PC-3 (cell line): ENCODE measurements at regions of chr10 and their contacts with region 1.

Region 1: DNA sequence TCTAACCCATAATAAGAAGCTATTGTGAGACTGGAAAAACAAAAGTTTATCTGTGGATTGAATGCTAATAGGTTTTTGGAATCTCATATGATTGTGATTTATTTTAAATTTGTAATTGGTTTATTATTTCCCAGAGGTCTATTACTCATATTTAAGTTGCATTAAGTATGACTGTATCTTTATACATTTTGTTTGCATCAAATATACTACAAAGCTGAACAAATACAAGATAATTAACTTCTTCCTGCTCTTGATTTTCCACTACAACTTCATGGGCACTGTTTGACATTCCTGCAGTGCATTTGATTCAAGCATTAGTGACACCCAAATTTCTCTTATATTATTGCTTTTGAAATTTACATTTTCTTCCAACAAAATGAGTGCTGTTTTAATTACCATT is 303.8 kb upstream of the LRRTM3 start:
- DNase-seq: peak; percentile 71
- ATAC-seq: peak; percentile 81
- H3K4me3 ChIP-seq: no peak overlapping the region
- H3K27ac ChIP-seq: peak overlapping the region; percentile 13
- H3K4me1 ChIP-seq: peaks cover 34% of the 10 kb centered on the region
- H3K27me3 ChIP-seq: no peaks in the 10 kb centered on the region
- CTCF ChIP-seq: no peak

Region 2: DNA sequence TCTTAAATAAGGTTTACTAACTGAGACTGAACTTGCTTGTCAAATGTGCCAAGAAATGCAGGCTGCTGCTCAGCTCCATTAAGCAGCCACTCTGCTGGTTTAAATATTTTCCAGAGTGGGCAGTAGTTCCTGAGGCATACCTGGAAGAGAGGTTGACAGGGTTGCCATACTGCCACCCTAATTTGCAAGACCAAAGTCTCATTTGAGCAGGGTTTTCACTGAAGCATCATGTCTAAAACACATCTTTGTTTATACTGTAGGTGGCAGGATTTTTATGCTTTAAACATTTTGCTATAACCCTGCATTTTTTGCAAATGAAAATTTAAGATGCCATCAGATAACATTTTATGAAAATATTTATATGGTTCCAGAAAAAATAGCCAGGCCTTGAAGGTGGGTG is 314.2 kb before region 1 on chr10:
- CTCF ChIA-PET with region 1: no interaction called
- POLR2A ChIA-PET with region 1: no interaction called
- intact Hi-C with region 1: loop called (anchors 1 kb)
- DNase-seq: peak; percentile 78
- ATAC-seq: peak; percentile 87
- H3K4me3 ChIP-seq: no peak overlapping the region
- H3K27ac ChIP-seq: no peak overlapping the region
- H3K4me1 ChIP-seq: no peaks in the 10 kb centered on the region
- H3K27me3 ChIP-seq: no peaks in the 10 kb centered on the region
- CTCF ChIP-seq: peak; percentile 91

Region 3: DNA sequence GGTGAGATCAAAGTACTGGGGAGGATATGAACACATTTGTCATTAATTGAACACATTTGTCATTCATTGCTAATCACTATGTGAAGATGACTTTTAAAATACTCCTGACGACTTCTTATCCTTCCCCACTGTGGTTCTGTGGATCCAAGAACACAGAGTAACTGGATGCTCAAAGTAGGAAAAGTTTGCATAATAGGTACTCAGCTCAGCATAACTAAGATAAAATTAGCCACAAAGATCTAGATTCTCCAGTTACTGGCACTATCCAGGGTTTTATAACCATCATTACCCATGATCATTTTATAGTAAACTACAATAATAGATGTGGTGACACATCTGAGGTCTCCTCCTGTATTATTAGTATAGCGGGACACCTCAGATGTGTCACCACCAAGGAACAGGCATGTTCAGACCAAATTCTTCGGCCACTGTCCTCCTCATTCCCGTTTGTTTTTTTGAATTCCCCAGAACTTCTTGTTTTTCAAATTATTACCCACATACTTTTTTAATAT is 140.2 kb after region 1 on chr10:
- CTCF ChIA-PET with region 1: no interaction called
- POLR2A ChIA-PET with region 1: no interaction called
- intact Hi-C with region 1: no loop called
- DNase-seq: no peak
- ATAC-seq: no peak
- H3K4me3 ChIP-seq: no peak overlapping the region
- H3K27ac ChIP-seq: no peak overlapping the region
- H3K4me1 ChIP-seq: no peaks in the 10 kb centered on the region
- H3K27me3 ChIP-seq: no peaks in the 10 kb centered on the region
- CTCF ChIP-seq: no peak